Cardiac septum (tissue), 1 donor: ENCODE measurements at regions of chr12 and their contacts with region 1.

Region 1: GRCh38 chr12:123365025-123365917 is 624 bp upstream of the SBNO1 start:
- DNase-seq: peak; percentile 99

Region 2: DNA sequence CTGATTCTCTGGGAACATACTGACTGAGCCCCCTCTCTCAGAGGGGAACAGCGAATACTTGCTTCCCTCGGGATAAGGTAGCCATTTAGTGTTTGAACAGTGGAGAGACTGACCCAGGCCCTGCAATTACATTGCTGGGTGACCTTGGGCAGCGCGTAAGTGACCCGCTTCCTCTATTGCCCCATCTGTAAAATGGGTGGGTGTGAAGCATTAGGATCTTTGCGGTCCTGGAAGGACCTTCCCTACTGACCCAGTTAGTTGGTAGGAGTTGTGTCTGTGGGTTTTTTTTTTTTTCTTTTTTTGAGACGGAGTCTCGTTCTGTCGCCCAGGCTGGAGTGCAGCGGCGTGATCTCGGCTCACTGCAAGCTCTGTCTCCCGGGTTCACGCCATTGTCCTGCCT is 17.4 kb after region 1 on chr12:
- intact Hi-C with region 1: loop called (anchors 2 kb)
- DNase-seq: no peak